ENCODE measurements at regions of chr6 and their contacts with region 1.

Region 1: DNA sequence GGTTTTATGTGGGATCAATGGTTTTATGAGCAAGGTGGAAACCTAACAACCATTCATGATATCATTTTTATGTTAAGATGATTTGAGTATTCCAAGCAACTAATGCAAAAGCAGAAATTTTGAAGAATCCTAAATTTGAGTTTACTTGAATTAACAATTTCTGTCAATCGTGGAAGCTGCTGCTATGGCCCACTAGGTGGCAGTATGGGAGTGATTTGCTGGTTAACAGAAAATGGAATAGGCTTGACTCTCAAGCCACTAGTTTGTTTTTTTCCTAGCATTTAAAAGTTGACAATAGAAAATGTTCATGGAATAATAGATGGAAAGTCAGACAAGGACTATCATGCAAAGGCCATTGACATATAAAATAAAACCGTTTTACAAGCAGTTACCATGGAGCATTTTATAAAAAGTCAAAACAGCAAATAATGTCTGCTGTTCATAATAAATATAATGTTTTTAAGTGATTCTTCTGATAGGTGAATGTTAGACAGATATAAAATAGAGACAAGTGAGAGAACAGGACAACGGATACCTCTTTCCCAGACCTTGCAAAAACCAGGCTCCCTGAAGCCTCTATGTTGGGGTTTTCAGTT is 43.0 kb upstream of the TMEM200A start:
- DNase-seq: peak in 1 of 2 donors; percentile 53
- ATAC-seq: peak in 1 of 4 donors; percentile 57
- H3K4me3 ChIP-seq: no peak overlapping the region
- H3K27ac ChIP-seq: no peak overlapping the region
- H3K4me1 ChIP-seq: no peaks in the 10 kb centered on the region
- H3K27me3 ChIP-seq: no peaks in the 10 kb centered on the region
- CTCF ChIP-seq: peak; percentile 89

Region 2: DNA sequence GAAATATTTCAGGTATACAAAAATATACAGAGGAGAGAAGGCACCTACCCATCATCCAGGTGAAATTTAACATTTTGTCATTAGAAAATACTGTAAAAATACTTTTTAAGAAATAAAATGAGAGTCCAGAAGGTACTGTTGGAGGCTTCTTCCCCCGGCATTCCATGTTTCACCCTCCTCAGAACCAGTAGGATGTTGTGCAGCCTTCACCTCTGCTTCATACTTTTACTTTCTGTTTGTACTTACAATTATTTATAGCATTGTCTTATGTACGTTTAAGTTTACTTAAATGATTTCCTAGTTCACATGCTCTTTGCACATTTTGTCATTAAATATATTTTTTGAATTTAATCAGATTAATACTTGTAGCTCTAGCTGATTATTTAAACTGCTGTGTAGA is 74.0 kb after region 1 on chr6:
- intact Hi-C with region 1: no loop called
- DNase-seq: no peak
- ATAC-seq: no peak
- H3K4me3 ChIP-seq: no peak overlapping the region
- H3K27ac ChIP-seq: no peak overlapping the region
- H3K4me1 ChIP-seq: no peaks in the 10 kb centered on the region
- H3K27me3 ChIP-seq: no peaks in the 10 kb centered on the region
- CTCF ChIP-seq: no peak

Region 3: GRCh38 chr6:130421585-130421984 is 98.8 kb after region 1 on chr6:
- intact Hi-C with region 1: no loop called
- DNase-seq: no peak
- ATAC-seq: no peak
- H3K4me3 ChIP-seq: no peak overlapping the region
- H3K27ac ChIP-seq: no peak overlapping the region
- H3K4me1 ChIP-seq: no peaks in the 10 kb centered on the region
- H3K27me3 ChIP-seq: peaks cover 0 to 2% (median 0%) of the 10 kb centered on the region in 3 donors
- CTCF ChIP-seq: no peak

Region 4: DNA sequence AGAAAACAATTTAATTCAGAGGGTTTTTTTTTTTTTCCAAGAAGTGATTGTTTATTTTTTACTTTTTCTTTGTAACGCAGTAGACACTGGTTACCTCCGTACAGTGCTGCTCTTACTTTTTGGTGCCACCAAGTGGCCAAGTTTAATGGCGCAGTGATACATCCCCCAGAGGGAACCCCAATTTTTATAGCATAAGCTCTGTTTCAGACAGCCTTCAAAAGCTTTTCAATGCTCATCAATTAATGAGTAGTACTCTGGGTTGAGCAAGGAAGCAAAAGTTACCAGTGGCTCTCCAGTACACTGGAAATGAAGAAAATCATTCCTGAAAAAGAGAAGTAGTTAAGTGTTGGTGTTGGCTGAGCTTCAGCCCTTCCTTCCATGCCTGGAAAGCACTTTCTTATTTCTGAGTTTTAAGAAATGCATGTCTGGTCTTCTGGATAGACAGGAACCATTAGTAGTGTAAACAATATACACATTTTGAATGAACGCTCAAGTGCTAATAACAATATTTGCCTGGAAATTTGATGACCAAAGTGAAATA is 375.3 kb after region 1 on chr6:
- intact Hi-C with region 1: loop called (anchors 2 to 5 kb)
- DNase-seq: no peak
- ATAC-seq: peak; percentile 40 to 76 (median 62)
- H3K4me3 ChIP-seq: no peak overlapping the region
- H3K27ac ChIP-seq: no peak overlapping the region
- H3K4me1 ChIP-seq: no peaks in the 10 kb centered on the region
- H3K27me3 ChIP-seq: no peaks in the 10 kb centered on the region
- CTCF ChIP-seq: peak; percentile 66

Region 5: GRCh38 chr6:130843575-130844320 is 521.0 kb after region 1 on chr6:
- intact Hi-C with region 1: loop called in 1 of 2 experiments (anchors 10 kb)
- DNase-seq: no peak
- ATAC-seq: no peak
- H3K4me3 ChIP-seq: no peak overlapping the region
- H3K27ac ChIP-seq: no peak overlapping the region
- H3K4me1 ChIP-seq: no peaks in the 10 kb centered on the region
- H3K27me3 ChIP-seq: no peaks in the 10 kb centered on the region
- CTCF ChIP-seq: peak; percentile 36

Region 6: DNA sequence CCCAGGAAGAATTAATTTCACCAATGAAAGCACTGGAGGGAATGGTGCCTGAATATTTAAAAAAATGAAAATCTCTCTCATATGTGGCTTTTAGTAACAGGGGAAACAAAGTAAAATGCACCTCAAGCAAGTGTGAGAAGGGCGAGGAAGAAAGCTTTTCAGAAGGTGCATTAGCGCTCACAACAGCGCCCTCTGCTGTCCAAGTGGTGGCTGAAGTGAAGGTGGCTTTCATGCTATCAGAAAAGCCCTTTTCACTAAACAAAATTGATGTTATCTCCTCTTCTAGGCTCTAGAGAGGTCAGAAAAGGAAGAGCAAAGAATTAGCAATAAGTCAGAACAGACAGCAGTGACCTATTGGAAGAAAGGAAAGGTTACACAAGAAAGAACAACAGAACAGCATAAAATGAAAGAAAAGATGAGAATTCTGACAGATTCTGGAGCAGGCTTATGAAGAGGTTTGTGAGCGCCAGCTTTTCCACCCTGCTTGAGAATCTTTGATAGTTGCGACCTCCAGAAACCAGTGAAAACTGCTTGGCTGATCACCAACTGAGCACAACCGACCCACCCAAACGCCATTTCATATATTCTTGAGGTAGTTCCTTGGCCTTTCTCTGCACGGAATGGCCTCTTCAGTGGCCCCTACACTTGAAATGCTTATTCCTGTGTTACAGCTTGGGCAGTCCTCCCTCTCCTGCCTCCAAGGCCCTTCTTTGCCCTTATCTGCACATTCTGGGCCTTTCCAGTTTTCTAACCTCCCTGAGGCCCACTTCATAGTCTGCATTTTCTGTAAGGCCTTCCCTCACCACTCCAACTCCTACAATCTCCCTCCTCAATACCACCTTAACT is 549.7 kb after region 1 on chr6:
- intact Hi-C with region 1: loop called in 1 of 2 experiments (anchors 5 kb)
- DNase-seq: peak; percentile 68 to 80
- ATAC-seq: peak in 1 of 4 donors; percentile 56
- H3K4me3 ChIP-seq: no peak overlapping the region
- H3K27ac ChIP-seq: no peak overlapping the region
- H3K4me1 ChIP-seq: no peaks in the 10 kb centered on the region
- H3K27me3 ChIP-seq: no peaks in the 10 kb centered on the region
- CTCF ChIP-seq: peak; percentile 78

Measured in psoas muscle (tissue), 8 donors.